ENCODE measurements at regions of chr11 and their contacts with region 1.

Region 1: GRCh38 chr11:75388386-75389275 is 10.7 kb upstream of the RPS3 start:
- DNase-seq: peak; percentile 33 to 77
- H3K4me3 ChIP-seq: 0 out of 8 replicates have a peak overlapping the region, but pooled peaks of 1 of the 4 experiments have one; percentile 1
- H3K27ac ChIP-seq: no peak overlapping the region
- H3K4me1 ChIP-seq: peaks cover 0 to 3% (median 0%) of the 10 kb centered on the region in 4 experiments; a peak in 3 of 7 replicates
- H3K27me3 ChIP-seq: no peaks in the 10 kb centered on the region
- CTCF ChIP-seq: peak; percentile 56 to 79 (median 78)
- EP300 ChIP-seq: no peak
- POLR2A ChIP-seq: no peak
- RAD21 ChIP-seq: peak; percentile 84 to 85

Region 2: DNA sequence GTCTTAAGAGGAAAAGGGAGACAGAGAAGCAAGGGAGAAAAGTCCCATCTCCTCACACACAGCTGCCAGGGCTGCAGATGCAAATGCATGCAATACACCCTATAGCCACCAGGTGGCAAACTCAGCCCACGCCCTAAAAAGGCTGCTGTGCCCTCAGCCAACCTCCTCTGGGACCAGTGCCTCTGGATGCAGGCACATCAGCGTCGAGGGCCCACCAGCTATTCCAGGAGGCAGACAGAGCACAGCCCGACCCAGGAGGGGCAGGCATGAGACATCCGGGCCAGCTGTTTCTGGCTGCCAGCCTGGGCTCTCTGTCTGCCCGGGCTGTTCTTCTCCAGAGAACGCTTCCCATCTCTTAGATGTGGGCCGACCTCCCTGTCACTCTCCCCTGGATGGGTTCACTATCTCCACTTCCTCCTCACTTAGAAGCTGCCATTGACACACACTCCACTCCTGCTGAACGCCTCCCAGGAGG is 108.4 kb before region 1 on chr11:
- CTCF ChIA-PET with region 1: interaction called, 327 read pairs
- POLR2A ChIA-PET with region 1: no interaction called
- DNase-seq: peak; percentile 76 to 92
- H3K4me3 ChIP-seq: no peak overlapping the region
- H3K27ac ChIP-seq: no peak overlapping the region
- H3K4me1 ChIP-seq: peaks cover 0 to 6% (median 0%) of the 10 kb centered on the region in 4 experiments; a peak in 2 of 7 replicates
- H3K27me3 ChIP-seq: no peaks in the 10 kb centered on the region
- CTCF ChIP-seq: peak; percentile 94 to 100 (median 96)
- EP300 ChIP-seq: no peak
- POLR2A ChIP-seq: no peak
- RAD21 ChIP-seq: peak; percentile 98

Region 3: DNA sequence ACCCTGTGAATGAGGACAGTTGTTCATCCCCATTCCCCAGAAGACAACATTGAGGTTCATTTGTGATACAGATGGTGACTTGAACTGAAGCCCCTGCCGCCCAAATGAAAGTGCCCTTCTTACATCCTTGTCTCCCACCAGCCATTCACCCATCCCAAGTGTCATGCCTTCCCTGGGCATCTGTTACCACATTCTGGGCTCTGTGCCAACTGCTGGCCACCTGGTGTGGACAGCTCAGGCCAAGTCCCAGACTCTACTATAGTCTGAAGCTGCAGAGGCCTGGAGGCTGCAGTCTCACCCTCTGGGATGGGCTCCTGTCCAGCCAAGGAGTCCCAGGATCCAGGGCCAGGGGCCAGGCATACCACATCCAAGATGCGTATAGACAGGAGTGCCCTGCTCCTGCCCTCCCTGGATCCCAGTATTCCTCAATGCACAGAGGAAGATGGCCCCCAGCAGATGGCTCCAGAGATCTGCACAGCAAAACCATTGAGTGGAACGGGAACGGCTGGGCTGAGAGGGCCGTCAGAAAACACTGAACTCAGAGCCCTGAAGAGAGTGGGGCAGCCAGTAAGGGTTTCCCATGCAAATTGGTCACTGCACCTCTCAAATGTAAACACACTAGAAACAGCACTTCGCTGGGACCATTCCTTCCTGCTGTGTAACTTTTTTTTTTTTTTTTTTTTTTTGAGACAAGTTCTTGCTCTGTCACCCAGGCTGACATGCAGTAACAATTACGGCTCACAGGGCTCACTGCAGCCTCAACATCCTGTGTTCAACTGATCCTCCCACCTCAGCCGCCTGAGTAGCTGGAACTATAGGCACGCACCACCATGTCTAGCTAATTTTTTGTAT is 60.0 kb before region 1 on chr11:
- CTCF ChIA-PET with region 1: interaction called, 167 read pairs
- POLR2A ChIA-PET with region 1: interaction called, 35 read pairs
- DNase-seq: peak in 1 of 2 experiments; percentile 65
- H3K4me3 ChIP-seq: no peak overlapping the region
- H3K27ac ChIP-seq: no peak overlapping the region
- H3K4me1 ChIP-seq: peaks cover 0 to 13% (median 2%) of the 10 kb centered on the region in 4 experiments; a peak in 4 of 7 replicates
- H3K27me3 ChIP-seq: no peaks in the 10 kb centered on the region
- CTCF ChIP-seq: peak; percentile 60 to 77 (median 70)
- EP300 ChIP-seq: no peak
- POLR2A ChIP-seq: no peak
- RAD21 ChIP-seq: peak; percentile 86 to 90

Region 4: GRCh38 chr11:75365711-75366181 is 22.9 kb before region 1 on chr11:
- CTCF ChIA-PET with region 1: interaction called, 16 read pairs
- POLR2A ChIA-PET with region 1: interaction called, 3 read pairs
- DNase-seq: no peak
- H3K4me3 ChIP-seq: no peak overlapping the region
- H3K27ac ChIP-seq: no peak overlapping the region
- H3K4me1 ChIP-seq: no peaks in the 10 kb centered on the region
- H3K27me3 ChIP-seq: no peaks in the 10 kb centered on the region
- CTCF ChIP-seq: no peak
- EP300 ChIP-seq: no peak
- POLR2A ChIP-seq: no peak
- RAD21 ChIP-seq: no peak

Region 5: GRCh38 chr11:75406338-75406777 is 17.7 kb after region 1 on chr11:
- CTCF ChIA-PET with region 1: interaction called, 48 read pairs
- POLR2A ChIA-PET with region 1: interaction called, 570 read pairs
- DNase-seq: no peak
- H3K4me3 ChIP-seq: no peak overlapping the region
- H3K27ac ChIP-seq: no peak overlapping the region
- H3K4me1 ChIP-seq: peaks cover 0 to 9% (median 2%) of the 10 kb centered on the region in 4 experiments; a peak in 3 of 7 replicates
- H3K27me3 ChIP-seq: no peaks in the 10 kb centered on the region
- CTCF ChIP-seq: no peak
- EP300 ChIP-seq: no peak
- POLR2A ChIP-seq: no peak; a peak in 1 of 3 replicates
- RAD21 ChIP-seq: no peak

Region 6: DNA sequence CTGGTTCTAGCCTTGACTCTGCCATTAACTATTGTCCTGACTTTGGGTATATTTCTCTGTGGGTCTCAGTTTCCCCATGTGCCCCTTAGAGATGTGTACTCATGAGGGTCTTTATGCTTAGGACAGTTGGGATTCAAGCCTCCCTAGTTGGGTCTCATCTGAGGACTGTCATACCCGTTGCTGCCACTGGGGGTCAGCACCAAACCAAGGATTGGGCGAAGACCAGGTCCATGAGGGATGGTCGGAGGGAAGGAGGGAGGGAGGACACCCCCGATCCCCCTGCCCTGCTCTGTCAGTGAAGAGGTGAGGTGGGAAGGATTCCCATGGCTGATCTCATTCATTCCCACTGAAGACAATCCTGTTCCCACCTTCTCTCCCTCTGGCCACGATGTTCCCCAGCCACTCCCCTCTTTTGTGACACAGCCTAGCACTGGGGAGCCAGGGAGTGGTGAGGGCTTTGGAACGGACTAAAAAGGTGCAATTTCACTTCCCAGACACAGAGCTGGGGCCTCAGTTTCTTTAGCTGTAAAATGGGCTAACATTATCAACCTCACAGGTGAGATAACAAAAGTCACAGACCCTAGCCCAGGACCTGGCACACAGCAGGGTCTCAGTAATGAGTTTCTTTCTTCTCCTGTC is 56.8 kb after region 1 on chr11:
- CTCF ChIA-PET with region 1: interaction called, 15 read pairs
- POLR2A ChIA-PET with region 1: interaction called, 3 read pairs
- DNase-seq: peak in 1 of 2 experiments; percentile 95
- H3K4me3 ChIP-seq: no peak overlapping the region
- H3K27ac ChIP-seq: no peak overlapping the region
- H3K4me1 ChIP-seq: no peaks in the 10 kb centered on the region
- H3K27me3 ChIP-seq: no peaks in the 10 kb centered on the region
- CTCF ChIP-seq: peak; percentile 94 to 98 (median 94)
- EP300 ChIP-seq: no peak
- POLR2A ChIP-seq: no peak
- RAD21 ChIP-seq: peak; percentile 99 to 100

Measured in H1 (cell line).